ENCODE measurements at regions of chr3 and their contacts with region 1.

Region 1: DNA sequence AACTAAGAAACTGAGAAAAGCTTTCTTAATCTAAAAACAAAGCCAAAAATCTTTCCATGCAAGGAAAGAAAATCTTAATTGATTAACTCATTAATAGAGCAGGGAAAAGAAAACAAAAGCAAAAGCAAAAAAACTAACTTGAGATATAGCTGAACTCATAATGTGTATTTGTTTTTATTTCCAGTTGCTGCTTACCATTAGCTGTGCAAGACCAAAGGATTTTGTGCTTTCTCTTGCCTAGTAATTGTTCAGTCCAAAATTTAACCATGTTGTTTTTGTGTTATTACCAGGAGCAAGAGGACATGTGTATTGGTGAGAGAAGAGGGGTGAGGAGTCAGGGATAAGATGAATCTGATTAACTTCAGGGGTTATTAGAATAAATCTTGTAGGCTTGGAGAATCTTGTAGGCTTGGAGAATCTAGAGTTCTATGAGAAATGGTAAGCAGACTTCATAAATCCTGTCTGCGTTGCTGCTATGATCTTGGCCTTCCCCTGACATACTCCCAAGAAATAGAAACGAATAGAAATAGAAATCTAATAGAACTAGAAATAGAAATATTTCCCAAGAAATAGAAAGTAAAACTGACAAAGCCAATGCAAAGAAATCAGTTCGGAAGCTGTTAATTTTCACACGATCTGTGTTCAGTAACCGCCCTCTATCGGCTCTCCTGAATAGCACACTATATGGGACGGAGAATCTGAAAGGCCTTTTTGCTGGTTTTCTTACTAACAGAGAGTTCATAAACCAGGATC is 72.6 kb upstream of the TNFSF10 start:
- DNase-seq: no peak
- ATAC-seq: peak; percentile 76 to 88
- H3K4me3 ChIP-seq: peak overlapping the region; percentile 37
- H3K27ac ChIP-seq: peak overlapping the region; percentile 51
- H3K4me1 ChIP-seq: peaks cover 30% of the 10 kb centered on the region
- H3K27me3 ChIP-seq: no peaks in the 10 kb centered on the region
- CTCF ChIP-seq: peak; percentile 85

Region 2: GRCh38 chr3:172476347-172476746 is 119.5 kb before region 1 on chr3:
- intact Hi-C with region 1: loop called (anchors 10 kb)
- DNase-seq: no peak
- ATAC-seq: peak; percentile 26 to 50
- H3K4me3 ChIP-seq: peak overlapping the region; percentile 55
- H3K27ac ChIP-seq: no peak overlapping the region
- H3K4me1 ChIP-seq: no peaks in the 10 kb centered on the region
- H3K27me3 ChIP-seq: no peaks in the 10 kb centered on the region
- CTCF ChIP-seq: no peak